ENCODE measurements at regions of chr2 and their contacts with region 1.

Region 1: GRCh38 chr2:200471324-200471848 is 38.5 kb downstream of the KCTD18 start:
- DNase-seq: peak; percentile 73
- CTCF ChIP-seq: peak; percentile 62

Region 2: GRCh38 chr2:199973703-199974102 is 497.7 kb before region 1 on chr2:
- CTCF ChIA-PET with region 1: interaction called, 34 read pairs
- POLR2A ChIA-PET with region 1: no interaction called
- DNase-seq: no peak
- CTCF ChIP-seq: peak; percentile 43

Region 3: DNA sequence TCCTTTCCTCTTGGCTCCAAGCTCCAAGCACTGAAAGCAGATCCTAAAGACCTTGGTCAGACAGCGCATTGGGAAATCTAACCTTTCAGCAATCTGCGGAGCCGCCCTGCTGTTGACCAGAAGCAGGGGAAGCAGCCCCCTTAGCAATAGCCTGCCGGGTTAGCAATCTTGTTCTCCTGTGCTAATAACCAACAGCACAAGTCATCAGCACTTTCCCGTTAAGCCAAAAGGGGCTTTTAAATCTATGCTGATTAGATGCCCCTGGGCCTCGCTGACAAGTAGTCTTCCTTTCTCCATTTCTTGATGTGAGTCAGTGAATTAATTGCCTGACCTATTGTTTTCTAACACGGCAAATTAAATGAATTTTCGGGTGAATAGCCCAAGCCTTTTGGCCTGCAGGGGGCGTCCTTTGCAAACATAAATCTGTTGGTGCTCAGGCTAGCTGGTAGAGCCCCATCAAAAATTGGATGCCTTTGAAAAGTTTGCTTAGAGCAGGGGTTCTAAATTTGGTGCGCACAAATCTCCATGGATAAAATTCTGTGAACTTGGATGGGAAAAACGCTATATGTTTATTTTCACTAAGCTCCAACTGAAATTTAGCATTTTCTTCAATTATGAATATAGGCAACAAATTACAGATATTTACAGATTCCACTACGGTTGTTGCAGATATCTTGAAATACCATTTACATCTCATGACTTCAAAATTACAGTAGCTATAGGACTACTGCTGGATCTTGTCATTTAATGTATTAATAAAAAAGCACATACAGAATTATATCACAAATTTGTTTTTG is 491.4 kb before region 1 on chr2:
- CTCF ChIA-PET with region 1: interaction called, 34 read pairs
- POLR2A ChIA-PET with region 1: no interaction called
- DNase-seq: peak; percentile 50
- CTCF ChIP-seq: peak; percentile 82

Region 4: DNA sequence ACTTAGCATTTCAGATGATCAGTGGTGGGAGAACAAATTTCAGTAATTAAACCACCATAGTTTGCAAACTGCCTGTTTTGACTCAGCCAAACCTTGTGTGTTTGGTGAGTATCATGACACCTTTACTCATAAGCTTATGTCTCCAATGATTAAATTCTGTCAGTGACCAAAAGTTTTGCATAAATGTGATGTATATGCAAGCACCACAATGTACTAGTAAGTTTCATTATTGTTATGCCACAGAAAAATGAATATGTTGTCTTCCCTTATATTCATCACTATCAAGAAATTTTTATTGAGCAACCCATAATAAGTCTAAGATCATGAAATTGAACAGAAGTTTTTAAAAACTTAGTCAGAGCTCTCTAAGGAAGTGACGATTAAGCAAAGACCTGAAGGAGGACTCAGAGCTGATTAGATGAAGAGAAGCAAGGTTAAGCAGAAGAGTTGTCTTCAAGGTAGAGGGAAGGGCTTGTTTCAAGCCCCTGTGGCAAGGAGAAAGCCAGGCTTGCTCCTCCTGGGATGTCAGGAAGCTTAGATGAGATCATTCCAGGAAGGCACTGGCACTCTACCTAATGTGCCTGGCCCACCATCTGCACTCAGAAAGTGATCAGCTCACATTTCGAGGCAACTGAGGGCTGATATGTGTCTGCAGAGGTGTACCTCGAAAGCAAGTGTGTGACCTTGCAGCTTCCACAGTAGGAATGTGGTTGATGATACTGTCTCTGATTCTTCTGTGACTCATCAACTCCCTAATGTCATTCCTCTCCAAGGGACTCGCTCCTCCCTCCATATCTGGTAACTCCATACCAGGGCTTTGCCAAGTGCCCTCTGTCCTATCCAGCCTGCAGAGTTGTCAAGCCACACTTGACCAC is 16.2 kb before region 1 on chr2:
- CTCF ChIA-PET with region 1: interaction called, 26 read pairs
- POLR2A ChIA-PET with region 1: no interaction called
- DNase-seq: peak; percentile 30
- CTCF ChIP-seq: no peak

Region 5: GRCh38 chr2:200765139-200765951 is 294.0 kb after region 1 on chr2:
- CTCF ChIA-PET with region 1: no interaction called
- POLR2A ChIA-PET with region 1: no interaction called
- DNase-seq: no peak
- CTCF ChIP-seq: no peak

Measured in GM10248 (cell line).